MCF 10A (cell line): ENCODE measurements at regions of chr6 and their contacts with region 1.

Region 1: DNA sequence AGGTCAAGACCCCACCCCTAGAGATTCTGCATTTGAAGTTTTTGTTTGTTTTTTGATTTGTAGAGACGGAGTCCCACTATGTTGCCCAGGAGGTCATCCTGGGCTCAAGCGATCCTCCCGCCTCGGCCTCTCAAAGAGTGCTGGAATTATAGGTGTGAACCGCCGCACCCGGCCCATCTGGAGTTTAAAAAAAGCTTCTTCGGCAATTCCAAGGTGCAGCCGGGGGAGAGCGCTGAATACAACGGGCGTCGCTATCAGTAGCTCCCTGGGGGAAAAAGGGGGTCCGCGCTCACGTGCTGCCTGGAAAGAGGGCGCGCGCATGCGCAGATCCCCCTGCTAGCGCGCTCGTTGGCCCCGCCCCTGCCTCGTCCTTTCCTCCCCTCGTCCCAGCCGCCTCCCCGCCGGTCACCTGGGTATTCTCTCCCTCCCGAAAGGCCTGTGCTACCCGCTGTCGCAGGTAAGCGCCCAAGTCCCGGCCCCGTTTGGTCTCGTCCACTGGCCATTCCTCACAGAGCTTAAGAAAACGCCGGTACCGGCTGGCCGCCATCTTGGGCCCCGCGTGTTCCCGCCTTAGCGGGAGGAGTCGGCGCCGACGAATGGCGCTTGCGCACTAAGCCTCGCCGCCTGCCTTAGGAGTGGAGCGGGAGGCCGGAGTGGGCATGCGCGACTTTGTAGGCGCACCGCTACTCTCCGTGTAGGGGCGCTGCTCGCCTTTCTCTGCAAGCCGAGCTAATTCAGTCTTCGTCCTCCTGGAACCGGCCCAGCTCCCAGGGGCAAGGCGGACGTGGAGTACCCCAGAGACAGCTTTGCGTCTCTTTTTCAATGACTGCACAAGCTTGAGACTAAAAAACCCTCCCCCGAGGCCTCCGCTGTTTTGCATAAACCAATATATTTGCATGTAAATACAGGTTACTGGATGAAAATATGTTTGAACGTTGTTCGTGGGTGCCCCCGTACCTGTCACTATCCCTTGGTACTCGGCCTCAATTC is at the start of gene UQCC2:
- DNase-seq: peak; percentile 97
- H3K4me3 Mint-ChIP-seq: peak within 1 kb of the TSS; percentile 99
- H3K27ac Mint-ChIP-seq: peak within 1 kb of the TSS; percentile 84
- H3K4me1 Mint-ChIP-seq: peaks cover 24% of the 10 kb centered on the region
- H3K27me3 Mint-ChIP-seq: no peaks in the 10 kb centered on the region
- CTCF ChIP-seq: peak; percentile 61
- total RNA-seq, gene UQCC2: 122 and 147 TPM in 2 replicates

Region 2: GRCh38 chr6:33018904-33019303 is 692.5 kb before region 1 on chr6:
- CTCF ChIA-PET with region 1: no interaction called
- POLR2A ChIA-PET with region 1: no interaction called
- intact Hi-C with region 1: no loop called
- DNase-seq: no peak
- H3K4me3 Mint-ChIP-seq: no peak overlapping the region
- H3K27ac Mint-ChIP-seq: no peak overlapping the region
- H3K4me1 Mint-ChIP-seq: no peaks in the 10 kb centered on the region
- H3K27me3 Mint-ChIP-seq: peaks cover 72% of the 10 kb centered on the region
- CTCF ChIP-seq: no peak

Region 3: GRCh38 chr6:33694401-33694931 is 17.0 kb before region 1 on chr6:
- CTCF ChIA-PET with region 1: interaction called, 13 read pairs
- POLR2A ChIA-PET with region 1: interaction called, 7 read pairs
- intact Hi-C with region 1: no loop called
- DNase-seq: peak; percentile 71
- H3K4me3 Mint-ChIP-seq: no peak overlapping the region
- H3K27ac Mint-ChIP-seq: peak overlapping the region; percentile 70
- H3K4me1 Mint-ChIP-seq: peaks cover 8% of the 10 kb centered on the region
- H3K27me3 Mint-ChIP-seq: no peaks in the 10 kb centered on the region
- CTCF ChIP-seq: no peak

Region 4: GRCh38 chr6:33723371-33724085 is 12.1 kb after region 1 on chr6:
- CTCF ChIA-PET with region 1: interaction called, 10 read pairs
- POLR2A ChIA-PET with region 1: interaction called, 3 read pairs
- intact Hi-C with region 1: no loop called
- DNase-seq: no peak
- H3K4me3 Mint-ChIP-seq: no peak overlapping the region
- H3K27ac Mint-ChIP-seq: no peak overlapping the region
- H3K4me1 Mint-ChIP-seq: no peaks in the 10 kb centered on the region
- H3K27me3 Mint-ChIP-seq: peaks cover 25% of the 10 kb centered on the region
- CTCF ChIP-seq: no peak

Region 5: DNA sequence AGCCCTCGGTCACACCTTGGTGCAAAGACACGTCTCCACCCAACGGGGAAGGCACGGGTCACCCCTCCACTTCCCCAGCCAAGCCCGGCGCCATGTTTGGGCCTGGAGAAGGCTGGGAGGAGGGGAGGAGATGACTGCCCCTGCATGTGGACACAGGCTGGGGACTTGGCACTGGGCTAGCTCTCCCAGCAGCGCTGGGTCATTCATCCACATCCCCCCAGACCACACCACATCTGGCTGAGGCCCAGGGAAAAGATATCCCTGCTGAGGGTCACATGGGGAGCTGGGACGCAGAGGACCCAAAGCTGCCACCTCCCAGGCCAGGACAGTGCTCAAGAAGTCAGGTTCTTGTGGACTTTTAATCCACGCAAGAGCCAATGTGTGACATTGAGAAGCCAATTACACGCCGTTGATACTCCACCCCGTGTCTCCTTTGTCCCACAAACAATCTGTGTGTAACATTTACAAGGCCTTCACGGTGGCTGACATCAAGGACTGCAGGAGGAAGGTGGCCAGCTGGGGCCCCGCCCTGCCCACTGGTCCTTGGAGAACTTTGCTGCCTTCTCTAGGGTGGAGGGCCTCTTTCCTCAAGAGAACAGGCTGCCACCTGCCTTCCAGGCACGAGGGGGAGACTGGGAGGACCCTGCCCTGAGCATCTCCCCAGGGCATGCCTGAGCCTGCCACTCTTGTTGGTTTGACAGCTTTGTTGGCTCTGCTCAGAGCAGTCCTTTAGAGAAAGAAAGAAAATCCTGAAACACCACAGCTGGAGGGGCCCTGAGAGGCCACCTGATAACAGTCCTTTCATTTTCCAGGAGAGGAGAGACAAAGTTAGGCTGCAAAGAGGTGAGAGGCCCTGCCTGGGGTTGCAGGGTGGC is 40.6 kb after region 1 on chr6:
- CTCF ChIA-PET with region 1: interaction called, 69 read pairs
- POLR2A ChIA-PET with region 1: interaction called, 4 read pairs
- intact Hi-C with region 1: no loop called
- DNase-seq: peak; percentile 38
- H3K4me3 Mint-ChIP-seq: no peak overlapping the region
- H3K27ac Mint-ChIP-seq: peak overlapping the region; percentile 61
- H3K4me1 Mint-ChIP-seq: peaks cover 39% of the 10 kb centered on the region
- H3K27me3 Mint-ChIP-seq: no peaks in the 10 kb centered on the region
- CTCF ChIP-seq: no peak

Region 6: GRCh38 chr6:33771146-33772081 is 60.0 kb after region 1 on chr6:
- CTCF ChIA-PET with region 1: interaction called, 12 read pairs
- POLR2A ChIA-PET with region 1: interaction called, 9 read pairs
- intact Hi-C with region 1: no loop called
- DNase-seq: peak; percentile 69
- H3K4me3 Mint-ChIP-seq: no peak overlapping the region
- H3K27ac Mint-ChIP-seq: no peak overlapping the region
- H3K4me1 Mint-ChIP-seq: no peaks in the 10 kb centered on the region
- H3K27me3 Mint-ChIP-seq: no peaks in the 10 kb centered on the region
- CTCF ChIP-seq: peak; percentile 90